ENCODE measurements at regions of chr22 and their contacts with region 1.

Region 1: DNA sequence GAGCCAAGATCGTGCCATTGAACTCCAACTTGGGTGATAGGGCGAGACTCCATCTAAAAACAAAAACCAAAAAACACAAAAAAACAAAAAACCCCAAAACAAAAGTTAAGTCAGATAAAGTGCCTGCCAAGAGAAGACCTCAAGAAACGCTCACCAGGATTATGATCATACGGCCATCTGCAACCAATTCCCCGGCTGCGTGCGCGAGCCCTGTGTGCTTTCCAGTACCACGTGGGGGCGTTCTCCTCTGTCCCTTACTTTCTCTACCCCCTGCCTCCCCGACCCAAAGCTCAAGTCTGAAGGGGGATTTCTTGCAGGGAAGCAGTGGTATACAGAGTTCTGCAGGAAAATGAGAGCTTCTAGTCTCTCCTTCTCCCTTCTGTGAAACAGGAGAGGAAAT is 10.5 kb upstream of the RPS19BP1 start:
- DNase-seq: no peak
- ATAC-seq: no peak
- H3K4me3 ChIP-seq: no peak overlapping the region
- H3K27ac ChIP-seq: no peak overlapping the region
- H3K4me1 ChIP-seq: no peaks in the 10 kb centered on the region
- H3K27me3 ChIP-seq: peaks cover 11 to 38% (median 23%) of the 10 kb centered on the region in 3 donors
- CTCF ChIP-seq: no peak
- POLR2A ChIP-seq: no peak

Region 2: GRCh38 chr22:40036591-40037225 is 493.6 kb after region 1 on chr22:
- in situ Hi-C with region 1: loop called in 2 of 4 experiments (anchors 10 to 25 kb)
- intact Hi-C with region 1: no loop called
- DNase-seq: peak; percentile 22 to 47
- ATAC-seq: peak; percentile 38 to 63
- H3K4me3 ChIP-seq: no peak overlapping the region
- H3K27ac ChIP-seq: no peak overlapping the region
- H3K4me1 ChIP-seq: peaks cover 13 to 17% of the 10 kb centered on the region in 2 donors
- H3K27me3 ChIP-seq: no peaks in the 10 kb centered on the region
- CTCF ChIP-seq: peak; percentile 43 to 69 (median 67)
- POLR2A ChIP-seq: no peak

Measured in gastrocnemius medialis (tissue), 4 donors.